K562 (cell line): ENCODE measurements at regions of chr7 and their contacts with region 1.

Region 1: GRCh38 chr7:155676052-155676451 is 31.6 kb downstream of the RBM33 start:
- DNase-seq: no peak
- ATAC-seq: peak; percentile 56
- H3K4me3 ChIP-seq: no peak overlapping the region
- H3K27ac ChIP-seq: no peak overlapping the region
- H3K4me1 ChIP-seq: peaks cover 0 to 28% of the 10 kb centered on the region in 2 experiments; a peak in 4 of 5 replicates
- H3K27me3 ChIP-seq: no peaks in the 10 kb centered on the region
- CTCF ChIP-seq: no peak
- EP300 ChIP-seq: no peak
- POLR2A ChIP-seq: no peak
- RAD21 ChIP-seq: no peak

Region 2: DNA sequence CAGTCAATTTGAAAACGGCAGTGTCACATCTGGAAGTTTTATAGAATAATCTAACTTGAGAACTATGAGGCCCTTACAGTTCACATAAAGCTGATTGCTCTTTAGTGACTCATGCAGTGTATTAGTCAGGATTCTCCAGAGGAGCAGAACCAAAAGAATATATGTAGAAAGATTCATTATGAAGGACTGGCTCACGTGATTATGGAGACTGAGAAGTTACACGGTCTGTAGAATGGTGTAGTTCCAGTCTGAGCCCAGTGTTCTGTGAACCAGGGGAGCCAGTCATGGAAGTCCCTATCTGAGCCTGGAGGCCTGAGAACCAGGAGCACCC is 10.1 kb before region 1 on chr7:
- CTCF ChIA-PET with region 1: no interaction called
- POLR2A ChIA-PET with region 1: interaction called, 10 read pairs
- in situ Hi-C with region 1: no loop called
- intact Hi-C with region 1: no loop called
- DNase-seq: peak in 1 of 4 experiments; percentile 35
- ATAC-seq: peak; percentile 53
- H3K4me3 ChIP-seq: no peak overlapping the region
- H3K27ac ChIP-seq: 0 out of 3 replicates have a peak overlapping the region, but pooled peaks have one; percentile 15
- H3K4me1 ChIP-seq: peaks cover 3 to 5% of the 10 kb centered on the region in 2 experiments; a peak in 3 of 5 replicates
- H3K27me3 ChIP-seq: no peaks in the 10 kb centered on the region
- CTCF ChIP-seq: no peak
- EP300 ChIP-seq: no peak
- POLR2A ChIP-seq: no peak
- RAD21 ChIP-seq: no peak